Ovary (tissue), 10 donors: ENCODE measurements at regions of chr9 and their contacts with region 1.

Region 1: GRCh38 chr9:128579194-128579593 is 26.8 kb downstream of the SPTAN1 start:
- DNase-seq: no peak
- H3K4me3 ChIP-seq: no peak overlapping the region
- H3K27ac ChIP-seq: no peak overlapping the region
- H3K4me1 ChIP-seq: no peaks in the 10 kb centered on the region
- H3K27me3 ChIP-seq: no peaks in the 10 kb centered on the region
- CTCF ChIP-seq: no peak
- EP300 ChIP-seq: no peak
- POLR2A ChIP-seq: no peak

Region 2: GRCh38 chr9:128383007-128383753 is 196.0 kb before region 1 on chr9:
- intact Hi-C with region 1: no loop called
- DNase-seq: no peak
- H3K4me3 ChIP-seq: no peak overlapping the region
- H3K27ac ChIP-seq: no peak overlapping the region
- H3K4me1 ChIP-seq: no peaks in the 10 kb centered on the region
- H3K27me3 ChIP-seq: no peaks in the 10 kb centered on the region
- CTCF ChIP-seq: no peak
- EP300 ChIP-seq: no peak
- POLR2A ChIP-seq: no peak

Region 3: DNA sequence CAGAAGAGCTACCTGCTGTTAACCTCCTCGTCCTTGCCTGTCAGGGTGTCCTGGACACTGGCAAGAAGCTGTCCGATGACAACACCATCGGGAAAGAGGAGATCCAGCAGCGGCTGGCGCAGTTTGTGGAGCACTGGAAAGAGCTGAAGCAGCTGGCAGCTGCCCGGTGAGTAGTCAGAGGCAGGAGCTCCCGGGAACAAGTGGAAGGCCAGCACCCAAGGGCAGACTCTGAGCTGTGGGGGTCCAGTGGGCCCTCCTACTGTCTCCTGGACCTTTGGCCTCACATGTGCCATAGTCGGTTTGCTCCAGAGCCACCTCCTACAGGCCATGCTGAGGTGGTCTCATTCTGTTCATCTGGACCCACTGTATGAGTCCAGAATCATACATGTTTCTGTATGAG is 38.7 kb after region 1 on chr9:
- intact Hi-C with region 1: loop called in 1 of 4 experiments (anchors 1 kb)
- DNase-seq: no peak
- H3K4me3 ChIP-seq: no peak overlapping the region
- H3K27ac ChIP-seq: no peak overlapping the region
- H3K4me1 ChIP-seq: no peaks in the 10 kb centered on the region
- H3K27me3 ChIP-seq: no peaks in the 10 kb centered on the region
- CTCF ChIP-seq: no peak
- EP300 ChIP-seq: no peak
- POLR2A ChIP-seq: no peak